ENCODE measurements at regions of chrX and their contacts with region 1.

Region 1: GRCh38 chrX:42079968-42080367 is 156.6 kb upstream of the CASK start:
- DNase-seq: no peak
- H3K4me3 ChIP-seq: no peak overlapping the region
- H3K27ac ChIP-seq: no peak overlapping the region
- H3K4me1 ChIP-seq: no peaks in the 10 kb centered on the region
- H3K27me3 ChIP-seq: no peaks in the 10 kb centered on the region
- CTCF ChIP-seq: no peak
- EP300 ChIP-seq: no peak
- POLR2A ChIP-seq: no peak

Region 2: GRCh38 chrX:41457613-41458192 is 622.3 kb before region 1 on chrX:
- in situ Hi-C with region 1: no loop called
- intact Hi-C with region 1: loop called (anchors 5 kb)
- DNase-seq: no peak
- H3K4me3 ChIP-seq: no peak overlapping the region
- H3K27ac ChIP-seq: no peak overlapping the region
- H3K4me1 ChIP-seq: no peaks in the 10 kb centered on the region
- H3K27me3 ChIP-seq: no peaks in the 10 kb centered on the region
- CTCF ChIP-seq: no peak
- EP300 ChIP-seq: no peak
- POLR2A ChIP-seq: no peak

Region 3: DNA sequence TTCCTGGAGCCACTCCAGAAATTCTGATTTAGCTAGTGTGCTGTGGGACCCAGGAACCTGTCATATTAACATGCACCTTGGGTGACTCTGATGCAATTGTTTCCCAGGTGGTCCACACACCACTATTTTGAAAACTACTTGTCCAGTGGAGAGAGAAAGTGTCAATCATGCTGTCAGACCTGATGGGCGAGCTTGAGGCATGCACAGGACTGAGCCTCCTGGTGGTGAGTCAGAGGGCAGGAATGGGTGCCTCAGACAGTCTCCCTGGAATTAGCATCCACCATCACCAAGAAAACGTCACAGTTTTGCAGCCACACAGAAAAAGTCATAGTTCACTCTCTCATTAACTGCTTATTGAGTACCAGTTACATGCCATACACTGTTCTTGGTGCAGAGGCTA is 1394.3 kb after region 1 on chrX:
- in situ Hi-C with region 1: no loop called
- intact Hi-C with region 1: no loop called
- DNase-seq: no peak
- H3K4me3 ChIP-seq: no peak overlapping the region
- H3K27ac ChIP-seq: no peak overlapping the region
- H3K4me1 ChIP-seq: no peaks in the 10 kb centered on the region
- H3K27me3 ChIP-seq: no peaks in the 10 kb centered on the region
- CTCF ChIP-seq: no peak
- EP300 ChIP-seq: no peak
- POLR2A ChIP-seq: no peak

Measured in transverse colon (tissue), 4 donors.